Breast epithelium (tissue), 4 donors: ENCODE measurements at regions of chr11 and their contacts with region 1.

Region 1: DNA sequence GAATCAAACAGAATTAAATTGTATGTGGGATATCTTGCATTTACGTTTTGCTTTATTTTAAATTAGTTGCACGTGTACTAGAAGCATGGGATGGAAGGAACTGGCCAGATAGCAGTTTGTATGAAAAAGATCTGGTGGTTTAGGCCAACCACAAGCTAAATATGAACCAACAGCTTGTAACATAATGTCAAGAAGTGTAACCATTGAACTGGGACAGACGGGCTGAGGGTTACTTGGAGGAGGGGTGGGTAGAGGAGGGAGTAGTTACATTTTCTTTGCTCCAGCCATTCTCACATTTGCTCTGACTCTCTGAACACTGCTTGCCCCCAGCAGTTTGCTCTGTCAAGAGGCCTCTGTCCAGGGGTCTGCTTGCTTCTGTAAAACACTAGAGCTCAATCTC is 31.7 kb upstream of the CXCR5 start:
- DNase-seq: no peak
- H3K4me3 ChIP-seq: no peak overlapping the region
- H3K27ac ChIP-seq: no peak overlapping the region
- H3K4me1 ChIP-seq: no peaks in the 10 kb centered on the region
- H3K27me3 ChIP-seq: no peaks in the 10 kb centered on the region
- CTCF ChIP-seq: no peak
- POLR2A ChIP-seq: no peak

Region 2: GRCh38 chr11:117781627-117782026 is 1070.3 kb before region 1 on chr11:
- intact Hi-C with region 1: loop called (anchors 5 kb)
- DNase-seq: no peak
- H3K4me3 ChIP-seq: no peak overlapping the region
- H3K27ac ChIP-seq: no peak overlapping the region
- H3K4me1 ChIP-seq: no peaks in the 10 kb centered on the region
- H3K27me3 ChIP-seq: peaks cover 0 to 9% of the 10 kb centered on the region in 2 donors
- CTCF ChIP-seq: no peak
- POLR2A ChIP-seq: no peak

Region 3: DNA sequence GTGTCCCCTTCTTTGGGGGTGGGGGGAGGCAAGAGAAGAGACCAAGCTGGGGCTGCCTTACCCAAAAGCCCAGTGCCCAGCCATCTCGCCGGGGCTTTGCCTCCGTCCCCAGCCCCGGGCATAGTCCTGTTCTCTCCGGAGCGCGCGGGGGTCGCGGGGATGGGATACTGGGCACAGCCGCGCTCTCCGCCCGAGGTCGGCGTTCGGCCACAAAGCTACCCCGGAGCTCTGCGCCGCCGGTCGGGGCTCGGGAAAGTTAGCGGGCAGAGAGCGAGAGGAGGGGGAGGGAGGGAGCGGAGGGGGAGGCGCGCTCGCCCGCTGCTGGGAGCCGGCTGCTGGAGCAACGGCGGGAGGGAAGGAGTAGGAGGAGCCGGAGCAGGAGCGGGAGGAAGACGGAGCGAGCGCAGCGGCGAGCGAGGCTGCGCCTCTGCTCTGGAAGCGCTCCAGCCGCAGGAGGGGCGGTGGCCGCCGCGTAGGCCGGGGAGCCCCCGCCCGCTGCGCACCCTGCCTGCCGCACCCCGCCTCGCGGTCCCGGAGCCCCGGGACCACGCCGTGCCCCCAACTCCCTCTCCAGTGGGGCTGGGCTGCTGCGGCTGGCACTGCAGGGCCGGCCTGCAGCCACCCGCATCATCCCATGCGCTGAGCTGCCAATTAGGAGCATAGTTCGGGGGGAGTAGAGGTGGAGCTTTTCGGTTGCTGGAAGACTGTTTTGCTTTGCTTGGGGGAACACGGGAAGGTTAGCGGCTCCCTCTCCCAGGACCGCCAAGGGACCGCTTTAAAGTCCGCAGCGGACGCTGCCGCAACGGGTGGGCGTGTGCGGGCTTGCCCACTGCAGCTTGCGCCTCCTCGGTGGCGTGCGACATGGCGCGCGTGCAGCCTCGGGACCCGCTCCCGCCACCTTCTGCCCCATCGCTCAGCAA is 699.2 kb before region 1 on chr11 and contains the start of gene SCN4B:
- intact Hi-C with region 1: no loop called
- DNase-seq: no peak
- H3K4me3 ChIP-seq: peak within 1 kb of the TSS; percentile 45 to 71 (median 62)
- H3K27ac ChIP-seq: peak within 1 kb of the TSS; percentile 59 to 68
- H3K4me1 ChIP-seq: peaks cover 0 to 6% of the 10 kb centered on the region in 2 donors
- H3K27me3 ChIP-seq: peaks cover 0 to 29% of the 10 kb centered on the region in 2 donors
- CTCF ChIP-seq: no peak
- POLR2A ChIP-seq: no peak
- total RNA-seq, gene SCN4B: 3.3 to 7.9 (median 3.7) TPM

Region 4: GRCh38 chr11:118552341-118552740 is 299.6 kb before region 1 on chr11:
- intact Hi-C with region 1: no loop called
- DNase-seq: no peak
- H3K4me3 ChIP-seq: no peak overlapping the region
- H3K27ac ChIP-seq: no peak overlapping the region
- H3K4me1 ChIP-seq: no peaks in the 10 kb centered on the region
- H3K27me3 ChIP-seq: no peaks in the 10 kb centered on the region
- CTCF ChIP-seq: no peak
- POLR2A ChIP-seq: no peak

Region 5: DNA sequence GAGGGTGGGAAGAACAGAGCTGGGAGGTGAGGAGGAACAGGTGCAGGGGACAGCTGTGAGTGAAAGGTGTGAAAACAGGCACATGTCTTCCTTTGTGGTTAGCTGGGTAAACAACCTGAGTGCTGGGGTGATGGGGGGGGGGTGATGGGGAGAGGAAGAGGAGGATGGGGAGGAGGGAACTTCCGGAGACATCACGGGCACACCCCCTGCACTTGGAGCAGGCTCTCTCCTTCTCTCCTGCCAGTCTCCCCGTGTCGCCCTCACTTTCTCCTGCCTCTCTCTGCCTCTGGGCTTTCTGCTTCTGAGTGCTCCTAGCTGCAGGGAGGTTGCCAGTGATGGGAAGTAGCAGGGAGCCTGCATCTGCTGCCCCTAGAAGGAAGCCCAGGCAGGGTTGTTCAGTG is 40.6 kb after region 1 on chr11:
- intact Hi-C with region 1: loop called (anchors 2 kb)
- DNase-seq: no peak
- H3K4me3 ChIP-seq: no peak overlapping the region
- H3K27ac ChIP-seq: no peak overlapping the region
- H3K4me1 ChIP-seq: peaks cover 0 to 4% of the 10 kb centered on the region in 2 donors
- H3K27me3 ChIP-seq: no peaks in the 10 kb centered on the region
- CTCF ChIP-seq: no peak
- POLR2A ChIP-seq: no peak